ENCODE measurements at regions of chr6 and their contacts with region 1.

Region 1: DNA sequence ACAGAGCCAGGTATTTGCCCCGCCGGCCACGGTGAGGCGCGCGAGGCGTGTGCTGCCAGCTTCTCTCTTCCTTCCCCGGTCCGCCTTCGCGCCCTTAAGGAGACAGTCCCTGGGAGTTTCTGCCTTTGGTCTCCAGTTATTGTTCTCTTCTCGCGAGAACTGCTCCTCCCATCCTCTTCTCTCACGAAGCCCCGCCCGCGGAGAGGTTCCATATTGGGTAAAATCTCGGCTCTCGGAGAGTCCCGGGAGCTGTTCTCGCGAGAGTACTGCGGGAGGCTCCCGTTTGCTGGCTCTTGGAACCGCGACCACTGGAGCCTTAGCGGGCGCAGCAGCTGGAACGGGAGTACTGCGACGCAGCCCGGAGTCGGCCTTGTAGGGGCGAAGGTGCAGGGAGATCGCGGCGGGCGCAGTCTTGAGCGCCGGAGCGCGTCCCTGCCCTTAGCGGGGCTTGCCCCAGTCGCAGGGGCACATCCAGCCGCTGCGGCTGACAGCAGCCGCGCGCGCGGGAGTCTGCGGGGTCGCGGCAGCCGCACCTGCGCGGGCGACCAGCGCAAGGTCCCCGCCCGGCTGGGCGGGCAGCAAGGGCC is at the start of gene MAPK14:
- DNase-seq: peak; percentile 97
- H3K4me3 ChIP-seq: peak within 1 kb of the TSS; percentile 96 to 97
- H3K27ac ChIP-seq: peak within 1 kb of the TSS; percentile 72 to 88
- H3K4me1 ChIP-seq: no peaks in the 10 kb centered on the region; a peak in 2 of 4 replicates
- H3K27me3 ChIP-seq: no peaks in the 10 kb centered on the region
- CTCF ChIP-seq: peak; percentile 85
- EP300 ChIP-seq: no peak
- RAD21 ChIP-seq: peak; percentile 98
- polyA plus RNA-seq, gene MAPK14: 19.8 and 27.4 TPM in 2 replicates

Region 2: DNA sequence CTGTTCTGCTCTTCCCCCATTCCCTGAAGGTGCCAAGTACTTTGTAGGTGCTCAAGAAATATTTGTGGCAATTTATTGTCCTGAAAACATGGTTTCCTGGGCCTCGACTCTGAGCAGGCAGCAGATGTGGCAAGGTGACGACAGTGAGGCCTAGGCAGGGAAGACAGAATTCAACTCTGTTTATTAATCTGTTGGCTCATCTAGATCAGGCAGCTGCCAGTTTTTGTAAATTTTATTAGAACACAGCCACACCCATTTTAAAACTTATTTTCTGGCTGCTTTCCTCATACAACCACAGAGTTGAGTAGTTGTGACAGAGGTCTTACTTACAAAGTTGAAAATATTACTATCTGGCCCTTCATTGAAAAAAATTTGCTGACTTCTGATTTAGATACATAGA is 24.5 kb after region 1 on chr6:
- CTCF ChIA-PET with region 1: interaction called, 10 read pairs
- POLR2A ChIA-PET with region 1: no interaction called
- DNase-seq: no peak
- H3K4me3 ChIP-seq: no peak overlapping the region
- H3K27ac ChIP-seq: no peak overlapping the region
- H3K4me1 ChIP-seq: peaks cover 16 to 34% of the 10 kb centered on the region in 2 experiments; a peak in 3 of 4 replicates
- H3K27me3 ChIP-seq: no peaks in the 10 kb centered on the region
- CTCF ChIP-seq: no peak
- EP300 ChIP-seq: no peak
- RAD21 ChIP-seq: no peak

Region 3: DNA sequence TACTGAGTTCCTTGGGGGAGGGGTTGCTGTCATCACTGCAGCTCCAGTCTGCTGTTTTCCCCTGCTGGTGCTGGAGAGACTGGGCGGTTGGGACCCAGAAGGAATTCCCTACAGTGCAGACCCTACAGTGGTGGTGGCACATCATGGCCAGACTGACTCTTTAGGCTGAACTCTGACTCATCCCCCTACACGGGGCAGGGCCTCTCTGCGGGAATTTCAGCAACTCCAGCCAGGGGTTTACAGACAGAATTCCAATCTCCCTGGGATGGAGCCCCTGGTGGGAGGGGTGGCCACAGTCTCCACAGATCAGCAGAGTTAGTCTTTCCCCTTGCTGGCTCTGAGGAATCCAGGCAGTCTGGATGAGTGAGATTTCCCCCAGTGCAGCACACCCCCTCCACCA is 55.9 kb after region 1 on chr6:
- CTCF ChIA-PET with region 1: interaction called, 14 read pairs
- POLR2A ChIA-PET with region 1: no interaction called
- DNase-seq: no peak
- H3K4me3 ChIP-seq: no peak overlapping the region
- H3K27ac ChIP-seq: no peak overlapping the region
- H3K4me1 ChIP-seq: no peaks in the 10 kb centered on the region
- H3K27me3 ChIP-seq: no peaks in the 10 kb centered on the region
- CTCF ChIP-seq: no peak
- EP300 ChIP-seq: no peak
- RAD21 ChIP-seq: no peak

Region 4: GRCh38 chr6:36196880-36197548 is 169.4 kb after region 1 on chr6:
- CTCF ChIA-PET with region 1: interaction called, 10 read pairs
- POLR2A ChIA-PET with region 1: no interaction called
- DNase-seq: peak; percentile 99
- H3K4me3 ChIP-seq: peak overlapping the region; percentile 62 to 63
- H3K27ac ChIP-seq: peak overlapping the region; percentile 49 to 91; a peak in 3 of 4 replicates
- H3K4me1 ChIP-seq: peaks cover 6 to 16% of the 10 kb centered on the region in 2 experiments; a peak in 2 of 4 replicates
- H3K27me3 ChIP-seq: no peaks in the 10 kb centered on the region
- CTCF ChIP-seq: no peak
- EP300 ChIP-seq: no peak
- RAD21 ChIP-seq: no peak

Measured in SK-N-SH (cell line).